ENCODE measurements at regions of chr5 and their contacts with region 1.

Region 1: DNA sequence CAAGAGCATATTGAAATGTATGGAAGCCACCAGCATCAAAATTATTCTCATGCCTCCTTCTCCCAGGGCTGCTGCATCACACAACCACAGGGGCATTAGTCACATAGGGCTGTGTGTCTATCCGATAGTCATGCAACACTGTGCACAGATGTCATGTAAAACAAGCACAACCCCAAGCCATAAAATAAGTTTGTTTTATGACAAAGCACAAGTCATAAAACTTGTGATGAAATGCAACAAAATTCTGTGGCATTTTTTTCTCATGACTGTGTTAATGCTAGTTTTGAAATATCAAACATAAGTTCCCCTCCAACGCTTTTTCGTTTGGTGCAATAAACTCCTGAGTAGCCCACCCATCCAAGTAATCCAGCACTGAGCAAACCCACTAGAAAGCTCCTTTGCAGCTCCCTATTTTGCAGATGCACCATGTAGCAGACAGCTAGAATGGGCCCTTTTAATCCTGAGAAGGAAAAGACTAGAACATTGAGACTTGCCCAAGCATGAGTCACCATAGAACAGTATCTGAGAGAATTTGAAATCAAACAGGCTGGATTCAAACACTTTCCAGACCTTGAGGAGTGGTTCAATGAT is 93.3 kb upstream of the ZNF366 start:
- DNase-seq: peak; percentile 95
- ATAC-seq: peak; percentile 71
- H3K4me3 ChIP-seq: no peak overlapping the region
- H3K27ac ChIP-seq: peak overlapping the region; percentile 91; the same call in 1 of the 2 replicates
- H3K4me1 ChIP-seq: peaks cover 30% of the 10 kb centered on the region
- H3K27me3 ChIP-seq: no peaks in the 10 kb centered on the region
- CTCF ChIP-seq: no peak
- POLR2A ChIP-seq: no peak; the same call in 1 of the 2 replicates
- RAD21 ChIP-seq: no peak

Region 2: DNA sequence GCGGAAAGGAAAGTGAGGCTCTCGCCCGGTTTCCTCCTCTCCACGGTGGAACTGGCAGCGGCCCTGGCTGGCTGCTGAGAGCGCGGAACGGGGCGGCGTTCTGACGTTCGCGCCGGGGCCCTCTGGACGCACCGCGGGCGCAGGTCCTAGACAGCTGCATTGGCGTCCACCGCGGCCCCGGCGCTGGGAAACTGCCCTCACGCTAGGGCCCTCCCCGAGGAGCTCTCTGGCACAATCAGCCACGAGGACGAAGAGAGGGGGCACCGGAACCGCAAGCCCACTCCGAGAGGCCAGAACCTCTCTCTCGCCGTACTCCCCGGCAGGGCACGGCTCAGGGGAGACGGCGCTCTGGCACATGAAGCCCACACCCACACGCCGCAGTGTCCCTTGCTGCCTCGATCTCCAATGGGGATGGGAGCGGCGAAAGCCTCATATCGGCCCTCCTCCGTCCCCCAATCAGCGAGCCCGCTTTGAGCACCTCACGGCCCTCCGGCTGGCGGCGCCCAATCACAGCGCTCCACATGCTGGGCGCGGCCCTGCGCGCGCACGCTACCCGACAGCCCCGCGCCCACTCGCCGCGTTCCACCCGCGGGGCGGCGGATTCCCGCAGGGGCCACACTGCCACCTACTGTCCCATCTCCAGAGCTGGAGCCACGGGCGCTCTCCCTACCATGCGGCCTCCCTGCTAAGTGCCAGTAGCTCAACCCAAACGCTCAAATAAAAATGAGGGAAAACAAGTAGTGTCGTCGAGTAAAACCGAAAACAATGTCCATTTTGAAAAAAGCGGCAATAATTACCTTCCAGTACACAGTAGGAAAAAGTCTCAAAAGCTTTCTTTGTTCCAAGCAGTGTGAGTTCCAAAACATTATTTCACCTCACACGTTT is 292.3 kb before region 1 on chr5:
- CTCF ChIA-PET with region 1: no interaction called
- POLR2A ChIA-PET with region 1: no interaction called
- dilution Hi-C with region 1: no loop called
- in situ Hi-C with region 1: no loop called
- intact Hi-C with region 1: no loop called
- DNase-seq: peak; percentile 97
- ATAC-seq: peak; percentile 99
- H3K4me3 ChIP-seq: peak overlapping the region; percentile 58
- H3K27ac ChIP-seq: peak overlapping the region; percentile 58
- H3K4me1 ChIP-seq: no peaks in the 10 kb centered on the region; the same call in 1 of the 2 replicates
- H3K27me3 ChIP-seq: no peaks in the 10 kb centered on the region
- CTCF ChIP-seq: peak; percentile 95
- POLR2A ChIP-seq: peak; percentile 90
- RAD21 ChIP-seq: peak; percentile 90

Region 3: DNA sequence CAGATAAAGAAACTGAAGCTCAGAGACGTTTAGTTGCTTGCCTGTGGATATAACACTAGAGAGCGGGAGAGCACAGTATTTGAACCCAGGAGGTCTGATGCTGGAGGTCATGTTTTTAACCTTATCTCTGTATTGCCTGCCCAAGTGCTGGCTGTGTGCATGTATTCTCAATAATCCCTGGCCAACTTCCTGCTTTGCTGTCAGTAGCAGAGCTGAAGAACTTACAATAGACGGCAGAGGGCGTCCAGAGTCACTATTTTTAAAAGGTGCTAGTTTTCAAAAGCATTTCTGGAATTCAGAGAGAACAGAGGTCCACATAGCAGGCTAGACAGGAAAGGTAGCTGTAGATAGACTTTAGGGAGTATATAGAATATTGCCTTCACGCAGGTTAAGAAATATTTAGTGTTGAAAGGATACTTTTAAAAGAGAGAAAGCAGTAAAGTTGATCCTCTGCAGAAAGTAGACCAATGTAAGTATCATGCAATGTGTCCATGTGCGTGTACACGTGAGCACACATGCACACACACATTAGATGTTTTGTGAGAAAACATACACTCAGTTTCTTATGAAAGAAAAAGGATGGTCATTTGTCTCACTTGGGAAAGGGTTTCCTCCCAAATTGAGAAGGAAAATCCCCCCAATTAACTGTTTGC is 234.0 kb before region 1 on chr5:
- CTCF ChIA-PET with region 1: no interaction called
- POLR2A ChIA-PET with region 1: no interaction called
- dilution Hi-C with region 1: no loop called
- in situ Hi-C with region 1: no loop called
- intact Hi-C with region 1: loop called (anchors 10 kb)
- DNase-seq: peak; percentile 80
- ATAC-seq: peak; percentile 78
- H3K4me3 ChIP-seq: no peak overlapping the region
- H3K27ac ChIP-seq: no peak overlapping the region
- H3K4me1 ChIP-seq: peaks cover 10% of the 10 kb centered on the region
- H3K27me3 ChIP-seq: no peaks in the 10 kb centered on the region
- CTCF ChIP-seq: peak; percentile 81
- POLR2A ChIP-seq: no peak
- RAD21 ChIP-seq: peak; percentile 80